Mammary epithelial cell (primary cell): ENCODE measurements at regions of chr2 and their contacts with region 1.

Region 1: DNA sequence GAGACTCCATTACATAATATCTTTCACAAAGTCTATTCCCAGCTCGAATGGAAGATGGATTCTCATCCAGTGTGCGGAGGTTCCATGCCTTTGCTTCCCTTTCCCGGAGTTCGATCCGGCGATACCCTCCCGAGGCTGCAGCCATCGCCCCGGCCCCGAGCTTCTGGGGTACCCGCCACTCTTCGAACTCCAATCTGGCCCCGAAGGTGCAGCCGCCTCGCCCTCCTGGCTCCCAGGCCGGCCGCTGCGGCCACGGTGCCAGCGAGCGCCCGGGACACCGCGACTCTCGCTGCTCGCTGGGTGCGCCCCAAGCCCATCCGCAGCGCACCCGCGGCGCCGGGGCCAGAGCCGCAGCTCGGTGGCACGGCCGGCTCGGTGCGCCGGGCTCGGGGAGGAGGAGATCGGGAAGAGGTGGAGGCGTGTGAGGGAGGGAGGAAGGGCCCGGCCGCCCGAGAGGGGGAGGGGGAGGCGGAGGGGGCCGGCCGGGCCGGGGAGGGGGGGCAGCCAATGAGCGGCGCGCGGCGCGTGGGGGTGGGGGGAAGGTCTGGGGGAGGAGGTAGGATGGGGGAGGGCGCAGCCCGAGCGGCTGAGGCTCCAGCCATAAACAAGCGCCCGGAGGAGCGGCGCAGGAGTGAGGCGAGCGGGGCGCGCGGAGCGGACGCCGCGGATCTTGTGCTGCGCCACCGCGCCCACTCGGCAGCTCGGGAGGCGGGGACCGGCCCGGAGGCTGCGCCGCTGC is at the start of gene CRIM1:
- DNase-seq: peak; percentile 91
- H3K4me3 ChIP-seq: peak within 1 kb of the TSS; percentile 73 to 90 (median 87)
- H3K27ac ChIP-seq: peak within 1 kb of the TSS; percentile 80
- H3K4me1 ChIP-seq: peaks cover 29% of the 10 kb centered on the region
- H3K27me3 ChIP-seq: no peaks in the 10 kb centered on the region
- CTCF ChIP-seq: no peak
- total RNA-seq, gene CRIM1: 237 to 387 TPM

Region 2: DNA sequence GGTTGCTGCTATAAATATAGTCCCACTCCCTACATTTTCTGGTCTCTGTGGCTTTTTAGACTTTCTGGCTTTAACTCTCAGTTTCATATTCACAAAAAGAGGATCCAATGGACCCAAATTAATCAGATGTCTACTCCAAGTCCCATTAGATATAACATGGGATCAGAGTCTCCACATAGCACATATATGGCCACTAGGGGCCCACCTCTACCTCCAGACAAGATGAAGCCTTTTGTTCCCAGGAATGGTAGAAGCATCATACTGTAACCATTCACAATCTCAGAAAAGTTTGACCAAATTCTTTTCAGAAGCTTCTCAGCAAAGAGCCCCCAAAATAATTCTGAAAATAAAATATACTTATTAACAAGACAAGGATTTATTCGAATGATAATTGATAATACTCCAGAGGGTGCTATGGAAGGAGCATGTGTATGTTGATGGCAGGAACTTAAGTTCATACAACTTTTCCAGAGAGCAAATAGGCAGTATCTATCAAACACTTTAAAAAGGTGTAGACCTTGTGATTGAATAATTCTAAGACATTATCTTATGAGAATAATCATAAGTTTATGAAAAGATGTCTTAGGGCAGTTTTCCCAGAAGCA is 382.1 kb before region 1 on chr2:
- CTCF ChIA-PET with region 1: no interaction called
- dilution Hi-C with region 1: no loop called
- in situ Hi-C with region 1: no loop called
- intact Hi-C with region 1: loop called (anchors 2 kb)
- DNase-seq: peak; percentile 25
- H3K4me3 ChIP-seq: no peak overlapping the region
- H3K27ac ChIP-seq: no peak overlapping the region
- H3K4me1 ChIP-seq: no peaks in the 10 kb centered on the region
- H3K27me3 ChIP-seq: no peaks in the 10 kb centered on the region
- CTCF ChIP-seq: peak; percentile 55 to 69

Region 3: DNA sequence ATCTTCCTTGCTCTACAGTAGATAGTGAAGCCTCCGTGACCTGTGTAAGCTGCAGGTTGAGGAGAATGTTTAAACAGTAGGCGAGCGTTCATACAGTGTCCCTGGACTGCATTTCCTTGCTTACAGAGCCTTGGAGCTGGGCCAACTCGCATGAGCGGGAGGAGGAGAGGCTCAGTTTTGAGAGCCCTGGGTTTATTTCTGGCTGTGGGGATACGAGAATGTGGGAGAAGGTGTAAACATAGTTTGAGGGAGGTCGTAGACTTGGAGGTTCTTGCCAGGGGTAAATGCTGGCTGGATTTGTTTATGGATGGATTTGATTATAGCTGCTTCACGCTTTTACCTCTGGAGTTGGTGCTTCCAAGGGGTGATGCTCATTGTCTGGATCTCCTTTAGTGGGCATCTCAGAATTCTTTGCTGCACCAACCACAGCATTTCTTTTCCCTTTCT is 21.0 kb after region 1 on chr2:
- CTCF ChIA-PET with region 1: interaction called, 4 read pairs
- dilution Hi-C with region 1: no loop called
- in situ Hi-C with region 1: no loop called
- intact Hi-C with region 1: loop called (anchors 1 kb)
- DNase-seq: no peak
- H3K4me3 ChIP-seq: no peak overlapping the region
- H3K27ac ChIP-seq: peak overlapping the region; percentile 9
- H3K4me1 ChIP-seq: peaks cover 95% of the 10 kb centered on the region
- H3K27me3 ChIP-seq: no peaks in the 10 kb centered on the region
- CTCF ChIP-seq: no peak

Region 4: DNA sequence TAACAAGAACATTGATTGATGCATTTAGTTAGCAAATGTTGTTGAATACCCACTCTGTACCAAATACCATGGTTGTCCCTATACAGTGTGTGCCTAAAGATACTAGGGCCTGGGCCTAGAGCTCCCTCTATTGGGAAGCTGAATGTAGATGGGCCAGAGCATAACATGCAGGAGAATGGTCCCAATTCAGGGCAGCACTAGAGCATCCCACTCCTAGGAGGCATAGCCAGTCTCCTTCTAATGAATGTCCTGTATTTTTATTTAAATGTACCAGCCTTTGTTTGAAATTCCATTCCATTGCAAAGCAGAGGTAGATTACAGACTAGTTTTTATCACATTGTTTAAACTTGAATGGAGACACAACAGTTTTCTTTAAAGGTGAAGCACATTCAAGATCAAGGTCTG is 152.1 kb after region 1 on chr2:
- CTCF ChIA-PET with region 1: interaction called, 4 read pairs
- dilution Hi-C with region 1: no loop called
- in situ Hi-C with region 1: no loop called
- intact Hi-C with region 1: loop called (anchors 1 kb)
- DNase-seq: peak; percentile 35
- H3K4me3 ChIP-seq: no peak overlapping the region
- H3K27ac ChIP-seq: no peak overlapping the region
- H3K4me1 ChIP-seq: no peaks in the 10 kb centered on the region
- H3K27me3 ChIP-seq: no peaks in the 10 kb centered on the region
- CTCF ChIP-seq: peak; percentile 86 to 89

Region 5: DNA sequence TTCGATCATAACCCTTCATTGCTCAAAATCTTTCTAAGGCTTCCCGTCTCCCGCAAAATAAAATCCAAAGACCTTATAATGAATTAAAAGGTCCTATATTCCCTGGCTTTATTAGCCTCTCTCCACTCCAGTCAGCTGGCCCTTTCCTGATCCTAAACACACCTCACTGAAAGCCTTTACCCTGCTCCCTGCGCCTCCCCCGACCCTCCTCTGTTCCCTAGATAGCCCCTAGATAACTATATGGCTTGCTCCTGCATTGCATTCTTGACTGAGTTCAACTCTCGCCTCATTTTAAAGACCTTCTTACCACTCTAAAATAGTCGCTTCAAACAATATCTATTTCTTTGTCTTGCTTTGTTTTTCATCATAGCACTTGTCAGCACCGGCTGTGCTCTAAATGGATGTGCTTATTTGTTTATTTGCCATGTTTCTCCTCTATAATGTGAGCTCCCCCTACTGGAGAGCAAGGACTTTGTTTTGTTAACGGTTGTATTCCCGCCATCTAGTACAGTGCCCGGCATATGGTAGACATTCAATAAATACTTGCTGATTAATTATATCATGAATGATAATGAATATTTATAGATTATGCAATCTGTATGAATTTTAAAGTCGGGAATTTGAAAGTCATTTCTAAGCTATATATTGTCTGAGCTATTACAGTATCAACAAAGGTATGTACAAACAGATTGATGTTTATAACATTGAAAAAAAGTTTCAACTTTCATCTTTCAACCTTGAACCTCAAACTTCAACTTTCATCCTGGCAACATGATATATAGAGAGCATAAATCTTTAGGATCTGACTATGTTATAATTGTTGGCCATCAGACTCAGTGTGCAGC is 308.8 kb after region 1 on chr2:
- CTCF ChIA-PET with region 1: interaction called, 11 read pairs
- dilution Hi-C with region 1: no loop called
- in situ Hi-C with region 1: loop called in 1 of 2 experiments (anchors 10 kb)
- intact Hi-C with region 1: loop called (anchors 1 kb)
- DNase-seq: peak; percentile 49
- H3K4me3 ChIP-seq: no peak overlapping the region
- H3K27ac ChIP-seq: no peak overlapping the region
- H3K4me1 ChIP-seq: no peaks in the 10 kb centered on the region
- H3K27me3 ChIP-seq: no peaks in the 10 kb centered on the region
- CTCF ChIP-seq: peak; percentile 63 to 76

Region 6: GRCh38 chr2:36785179-36785795 is 430.0 kb after region 1 on chr2:
- CTCF ChIA-PET with region 1: no interaction called
- dilution Hi-C with region 1: no loop called
- in situ Hi-C with region 1: no loop called
- intact Hi-C with region 1: loop called (anchors 2 kb)
- DNase-seq: peak; percentile 66
- H3K4me3 ChIP-seq: no peak overlapping the region
- H3K27ac ChIP-seq: no peak overlapping the region
- H3K4me1 ChIP-seq: no peaks in the 10 kb centered on the region
- H3K27me3 ChIP-seq: no peaks in the 10 kb centered on the region
- CTCF ChIP-seq: peak; percentile 96